ENCODE measurements at regions of chr1 and their contacts with region 1.

Region 1: GRCh38 chr1:151070474-151071276 is at the start of gene GABPB2:
- DNase-seq: peak; percentile 90
- ATAC-seq: peak; percentile 87
- H3K4me3 Mint-ChIP-seq: peak within 1 kb of the TSS; percentile 99
- H3K27ac Mint-ChIP-seq: peak within 1 kb of the TSS; percentile 100
- H3K4me1 Mint-ChIP-seq: peaks cover 17% of the 10 kb centered on the region
- H3K27me3 Mint-ChIP-seq: no peaks in the 10 kb centered on the region
- CTCF ChIP-seq: peak; percentile 90
- total RNA-seq, gene GABPB2: 17.5 to 19.3 TPM

Region 2: DNA sequence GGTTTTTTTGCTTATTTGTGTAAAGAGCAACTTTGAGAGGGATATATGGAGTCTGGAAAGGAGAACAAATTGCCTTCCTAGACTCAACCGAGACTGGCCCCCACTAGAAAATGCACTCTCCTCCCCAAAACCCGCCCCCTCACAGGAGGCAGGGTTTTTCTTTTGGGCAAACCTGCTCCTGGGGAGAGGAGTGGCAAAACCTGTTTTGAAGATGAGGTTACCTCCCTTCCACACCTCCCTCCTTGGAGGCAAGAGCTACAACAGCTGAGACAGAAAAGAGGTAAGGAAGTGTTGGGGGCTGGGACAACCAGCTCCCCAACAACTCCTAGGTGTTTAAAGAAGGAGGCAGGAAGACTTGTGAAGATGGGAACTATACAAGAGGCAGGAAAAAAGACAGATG is 34.3 kb before region 1 on chr1 and contains the start of gene BNIPL:
- CTCF ChIA-PET with region 1: no interaction called
- POLR2A ChIA-PET with region 1: no interaction called
- intact Hi-C with region 1: no loop called
- DNase-seq: no peak
- ATAC-seq: no peak
- H3K4me3 Mint-ChIP-seq: no peak within 1 kb of the TSS
- H3K27ac Mint-ChIP-seq: no peak within 1 kb of the TSS
- H3K4me1 Mint-ChIP-seq: no peaks in the 10 kb centered on the region
- H3K27me3 Mint-ChIP-seq: no peaks in the 10 kb centered on the region
- CTCF ChIP-seq: no peak
- total RNA-seq, gene BNIPL: 0.54 to 1.4 TPM

Region 3: DNA sequence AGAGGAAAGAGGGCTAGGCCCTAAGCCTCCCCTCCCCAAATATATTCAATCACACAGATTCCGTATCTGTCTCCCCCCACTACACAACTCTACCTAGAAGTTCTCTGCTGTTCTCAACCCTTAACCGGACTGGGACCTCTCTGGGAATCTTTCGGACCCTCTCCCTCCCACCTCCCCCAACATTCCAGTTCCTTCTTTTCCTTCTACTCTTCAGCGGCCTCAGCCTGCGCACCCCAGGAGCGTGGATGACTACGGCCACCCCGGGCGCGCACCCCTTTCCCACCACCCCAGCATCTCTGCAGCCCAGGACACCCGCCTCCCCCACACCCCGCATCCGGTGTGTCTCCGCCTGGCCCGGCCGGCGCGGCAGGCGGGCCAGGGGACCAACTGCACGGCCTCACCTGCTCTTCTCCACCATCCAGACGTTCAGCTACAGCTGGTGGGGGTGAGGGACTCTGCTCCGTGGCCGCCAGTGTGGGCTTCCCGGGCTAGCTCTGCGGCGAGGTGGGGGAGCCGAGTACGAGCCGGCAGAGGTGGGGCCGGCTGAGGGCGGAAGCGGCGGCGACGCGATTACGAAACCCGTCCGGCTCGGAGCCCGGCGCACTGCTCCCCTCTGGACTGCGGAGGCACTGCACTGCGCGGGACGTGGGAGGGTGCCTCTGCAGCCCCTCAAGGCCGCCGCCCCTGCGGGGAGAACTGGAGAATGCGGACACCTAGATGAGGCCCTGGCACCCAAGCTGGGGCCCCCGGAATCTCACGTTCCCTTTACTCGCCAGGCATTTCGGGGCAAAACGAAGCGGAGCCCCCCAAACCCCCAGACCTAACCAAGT is 11.4 kb before region 1 on chr1 and contains the start of gene CDC42SE1:
- CTCF ChIA-PET with region 1: interaction called, 40 read pairs
- POLR2A ChIA-PET with region 1: interaction called, 40 read pairs
- intact Hi-C with region 1: no loop called
- DNase-seq: peak; percentile 92
- ATAC-seq: peak; percentile 80
- H3K4me3 Mint-ChIP-seq: peak within 1 kb of the TSS; percentile 96
- H3K27ac Mint-ChIP-seq: peak within 1 kb of the TSS; percentile 95
- H3K4me1 Mint-ChIP-seq: peaks cover 57% of the 10 kb centered on the region
- H3K27me3 Mint-ChIP-seq: no peaks in the 10 kb centered on the region
- CTCF ChIP-seq: peak; percentile 86
- total RNA-seq, gene CDC42SE1: 86.5 to 92.8 TPM

Region 4: DNA sequence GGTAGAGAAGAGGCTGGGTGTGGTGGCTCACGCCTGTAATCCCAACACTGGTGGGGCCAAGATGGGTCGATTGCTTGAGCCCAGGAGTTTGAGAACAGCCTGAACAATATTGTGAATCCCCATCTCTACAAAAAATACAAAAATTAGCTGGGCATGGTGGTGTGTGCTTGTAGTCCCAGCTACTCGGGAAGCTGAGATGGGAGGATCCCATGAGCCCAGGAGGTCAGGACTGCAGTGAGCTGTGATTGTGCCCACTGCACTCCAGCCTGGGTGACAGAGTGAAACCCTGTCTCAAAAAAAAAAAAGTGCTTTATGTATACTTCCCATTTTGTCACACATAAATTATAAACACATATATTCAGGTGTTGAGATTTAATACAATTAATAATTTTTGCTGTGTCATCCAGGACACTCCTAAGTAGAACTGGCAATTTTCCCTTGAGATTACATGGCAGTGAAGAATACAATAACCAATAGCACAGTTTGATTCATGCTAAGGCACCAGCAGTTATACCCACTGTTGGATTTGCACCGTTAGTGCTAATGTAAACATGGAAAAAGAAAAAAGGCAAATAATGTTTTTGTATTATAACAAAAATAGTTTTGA is 15.4 kb after region 1 on chr1:
- CTCF ChIA-PET with region 1: interaction called, 4 read pairs
- POLR2A ChIA-PET with region 1: interaction called, 10 read pairs
- intact Hi-C with region 1: no loop called
- DNase-seq: no peak
- ATAC-seq: no peak
- H3K4me3 Mint-ChIP-seq: no peak overlapping the region
- H3K27ac Mint-ChIP-seq: no peak overlapping the region
- H3K4me1 Mint-ChIP-seq: no peaks in the 10 kb centered on the region
- H3K27me3 Mint-ChIP-seq: no peaks in the 10 kb centered on the region
- CTCF ChIP-seq: no peak

Measured in activated CD8-positive, alpha-beta T cell treated with anti-CD3 and anti-CD28 coated beads for 36 hours (primary cell).